Naive thymus-derived CD4-positive, alpha-beta T cell (primary cell): ENCODE measurements at regions of chr2 and their contacts with region 1.

Region 1: DNA sequence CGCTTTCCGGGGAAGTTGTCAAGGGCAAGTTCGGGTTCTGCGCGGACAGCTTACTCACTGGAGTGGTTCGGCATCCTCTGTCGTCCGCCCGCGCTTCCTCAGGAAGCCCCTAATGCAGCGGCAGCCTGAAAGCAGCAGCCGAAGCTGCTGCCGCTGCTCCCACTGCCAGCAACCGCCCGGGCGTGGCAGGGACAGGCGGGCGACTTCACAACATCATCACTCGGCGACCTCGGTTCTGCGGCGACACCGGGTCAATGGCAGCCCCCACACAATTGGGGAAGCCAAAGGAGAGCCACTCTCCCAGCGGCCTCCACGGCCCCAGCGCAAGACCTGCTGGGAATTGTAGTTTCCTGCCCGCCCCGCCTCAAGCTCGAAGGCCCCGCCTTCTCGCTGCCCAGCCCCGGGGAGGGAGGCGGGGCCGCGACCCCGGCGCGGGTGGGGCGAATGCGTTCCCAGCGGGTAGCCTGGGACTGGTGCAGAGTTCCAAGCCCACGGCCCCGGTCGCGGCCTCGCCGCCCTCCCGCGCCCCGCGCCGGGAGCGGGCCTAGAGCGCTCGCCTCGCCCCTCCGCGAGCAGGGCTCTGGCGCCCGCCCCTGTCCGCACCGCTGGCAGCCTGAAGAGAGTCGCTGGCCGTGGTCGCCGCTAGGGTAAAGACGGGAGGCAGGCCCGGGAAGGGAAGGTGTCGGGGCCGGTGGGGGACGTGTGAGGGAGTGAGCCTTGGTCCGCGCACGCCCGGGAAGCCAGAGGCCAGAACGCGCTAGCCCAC is at the starts of genes STRADB and TRAK2:
- DNase-seq: peak; percentile 84 to 95 (median 92)
- ATAC-seq: peak; percentile 96
- H3K4me3 ChIP-seq: peak within 1 kb of the TSS; percentile 96
- H3K4me3 Mint-ChIP-seq: peak within 1 kb of the TSS; percentile 94 to 98 (median 97)
- H3K27ac ChIP-seq: peak within 1 kb of the TSS; percentile 83
- H3K27ac Mint-ChIP-seq: peak within 1 kb of the TSS; percentile 85 to 97 (median 95)
- H3K4me1 ChIP-seq: peaks cover 33 to 39% of the 10 kb centered on the region in 2 donors
- H3K4me1 Mint-ChIP-seq: peaks cover 27 to 69% (median 41%) of the 10 kb centered on the region in 7 donors
- H3K27me3 ChIP-seq: no peaks in the 10 kb centered on the region
- H3K27me3 Mint-ChIP-seq: peaks cover 0 to 8% (median 0%) of the 10 kb centered on the region in 5 donors
- total RNA-seq, gene STRADB: 11.9 to 18.4 (median 16.1) TPM
- total RNA-seq, gene TRAK2: 27.8 to 47.6 (median 35.2) TPM

Region 2: DNA sequence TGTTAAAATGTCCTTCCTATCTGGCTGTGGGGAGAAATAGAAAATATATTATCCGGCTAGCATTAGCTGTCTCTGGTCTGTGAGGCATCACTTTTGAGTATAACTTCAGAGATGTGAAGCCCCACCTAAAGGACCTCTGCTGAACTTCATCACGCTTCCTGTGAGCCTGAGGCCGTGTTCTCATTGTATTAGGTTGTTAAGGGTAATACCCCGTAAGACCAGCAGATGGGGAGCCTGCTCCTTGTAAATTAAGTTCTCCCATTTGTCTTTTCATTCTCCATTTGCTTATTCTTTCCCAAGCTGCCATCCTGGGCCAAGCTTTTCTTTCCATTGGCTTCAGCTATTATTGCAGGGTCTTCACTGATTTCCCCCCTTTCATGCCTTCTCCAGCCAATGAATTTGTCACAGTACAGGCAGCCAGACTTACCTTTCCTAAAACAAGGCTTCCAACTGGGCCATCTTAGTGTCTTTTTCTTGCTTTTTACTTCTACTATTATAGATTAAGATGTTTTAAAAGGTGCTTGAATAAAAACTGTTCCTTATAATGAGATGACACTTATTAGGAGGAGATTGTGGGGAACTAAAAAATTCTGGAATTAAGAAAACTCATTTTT is 549.9 kb before region 1 on chr2:
- CTCF ChIA-PET with region 1: no interaction called
- POLR2A ChIA-PET with region 1: no interaction called
- intact Hi-C with region 1: loop called in 1 of 2 experiments (anchors 5 kb)
- DNase-seq: peak; percentile 18 to 83 (median 76)
- ATAC-seq: peak; percentile 100
- H3K4me3 ChIP-seq: no peak overlapping the region
- H3K4me3 Mint-ChIP-seq: no peak overlapping the region
- H3K27ac ChIP-seq: no peak overlapping the region
- H3K27ac Mint-ChIP-seq: peak overlapping the region; percentile 4 to 86 (median 44)
- H3K4me1 ChIP-seq: no peaks in the 10 kb centered on the region
- H3K4me1 Mint-ChIP-seq: peaks cover 0 to 27% (median 6%) of the 10 kb centered on the region in 7 donors
- H3K27me3 ChIP-seq: no peaks in the 10 kb centered on the region
- H3K27me3 Mint-ChIP-seq: no peaks in the 10 kb centered on the region

Region 3: GRCh38 chr2:201059961-201060755 is 391.3 kb before region 1 on chr2:
- CTCF ChIA-PET with region 1: no interaction called
- POLR2A ChIA-PET with region 1: no interaction called
- intact Hi-C with region 1: no loop called
- DNase-seq: no peak
- ATAC-seq: no peak
- H3K4me3 ChIP-seq: no peak overlapping the region
- H3K4me3 Mint-ChIP-seq: no peak overlapping the region
- H3K27ac ChIP-seq: no peak overlapping the region
- H3K27ac Mint-ChIP-seq: peak overlapping the region in 3 of 9 donors; percentile 39 to 51 (median 50)
- H3K4me1 ChIP-seq: no peaks in the 10 kb centered on the region
- H3K4me1 Mint-ChIP-seq: peaks cover 30 to 54% (median 46%) of the 10 kb centered on the region in 7 donors
- H3K27me3 ChIP-seq: no peaks in the 10 kb centered on the region
- H3K27me3 Mint-ChIP-seq: no peaks in the 10 kb centered on the region

Region 4: DNA sequence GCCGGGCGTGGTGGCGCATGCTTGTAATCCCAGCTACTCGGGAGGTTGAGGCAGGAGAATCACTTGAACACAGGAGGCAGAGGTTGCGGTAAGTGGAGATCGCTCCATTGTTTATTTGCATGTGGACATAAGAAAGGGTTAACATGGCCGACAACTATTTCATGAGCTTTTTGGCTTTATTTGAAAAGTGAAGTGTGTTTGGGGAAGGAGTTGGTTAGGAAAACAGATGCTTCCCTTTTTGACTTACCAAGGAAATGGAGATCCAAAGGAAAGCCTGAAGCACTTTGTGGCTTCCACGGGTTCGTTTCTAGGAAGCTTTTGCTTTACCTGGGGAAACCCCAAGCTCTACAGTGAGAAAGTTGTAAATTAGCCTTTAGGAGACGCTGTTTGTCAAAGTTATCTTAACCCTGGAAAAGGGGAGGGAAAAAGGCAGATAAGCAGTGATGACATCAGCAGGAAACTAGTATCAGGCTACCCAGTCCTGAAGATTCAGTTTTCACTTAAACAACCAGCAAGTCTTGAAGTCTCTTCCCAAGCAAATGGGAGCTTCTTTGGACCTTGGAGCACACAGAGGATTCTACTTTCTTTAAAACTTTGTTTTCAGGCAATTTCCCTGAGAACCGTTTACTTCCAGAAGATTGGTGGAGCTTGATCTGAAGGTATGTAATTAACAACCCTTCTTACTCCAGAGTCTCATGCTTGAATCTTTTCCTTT is 268.7 kb before region 1 on chr2 and contains the start of gene CASP10:
- CTCF ChIA-PET with region 1: interaction called, 3 read pairs
- POLR2A ChIA-PET with region 1: interaction called, 5 read pairs
- intact Hi-C with region 1: loop called (anchors 1 kb)
- DNase-seq: peak in 7 of 9 donors; percentile 67 to 83 (median 77)
- ATAC-seq: peak; percentile 90
- H3K4me3 ChIP-seq: peak within 1 kb of the TSS; percentile 68
- H3K4me3 Mint-ChIP-seq: peak within 1 kb of the TSS; percentile 87 to 99 (median 95)
- H3K27ac ChIP-seq: peak within 1 kb of the TSS; percentile 89
- H3K27ac Mint-ChIP-seq: peak within 1 kb of the TSS; percentile 86 to 98 (median 95)
- H3K4me1 ChIP-seq: peaks cover 22 to 24% of the 10 kb centered on the region in 2 donors
- H3K4me1 Mint-ChIP-seq: peaks cover 26 to 46% (median 29%) of the 10 kb centered on the region in 7 donors
- H3K27me3 ChIP-seq: no peaks in the 10 kb centered on the region
- H3K27me3 Mint-ChIP-seq: no peaks in the 10 kb centered on the region
- total RNA-seq, gene CASP10: 29.0 to 49.8 (median 42.9) TPM

Region 5: DNA sequence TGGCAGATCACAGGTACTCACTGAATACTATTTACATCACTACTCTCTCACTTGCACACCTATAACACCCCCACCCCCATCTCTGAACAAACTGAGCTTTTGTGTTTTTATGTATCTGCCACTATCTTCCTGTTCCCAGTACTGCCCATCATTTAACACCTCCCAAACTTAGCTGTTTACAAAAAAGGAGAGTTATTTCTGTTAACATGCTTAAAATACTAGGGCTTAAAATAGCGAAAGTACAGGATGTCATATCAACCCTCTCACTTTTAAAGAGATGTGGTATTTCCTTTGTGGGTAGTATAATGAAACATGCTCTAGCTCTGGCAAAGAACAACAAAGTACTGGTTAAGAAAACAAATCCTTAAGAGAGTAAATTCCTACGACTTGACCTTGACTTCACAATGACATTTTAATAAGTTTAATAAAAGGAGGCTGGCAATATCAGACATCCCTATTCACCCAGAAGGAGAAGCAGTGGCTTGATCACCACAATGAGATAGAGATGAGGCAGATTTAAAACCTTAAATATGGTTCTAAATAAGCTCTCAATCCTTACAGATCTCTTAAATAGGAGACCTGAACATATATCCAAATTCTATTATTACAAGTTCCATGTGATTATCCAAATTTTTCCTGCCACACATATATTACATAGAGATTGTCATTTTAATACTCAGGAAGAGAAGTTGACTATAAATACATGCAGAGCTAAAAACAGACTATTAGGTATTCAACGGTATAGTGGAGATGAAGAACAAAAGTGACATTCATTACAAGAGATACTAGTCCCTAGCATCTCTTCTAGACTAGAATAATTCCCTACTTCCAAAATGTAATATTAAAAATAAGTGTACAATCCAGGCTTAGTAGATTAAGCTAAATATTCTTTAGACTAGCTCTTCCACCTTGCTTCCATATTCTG is 37.1 kb before region 1 on chr2:
- CTCF ChIA-PET with region 1: interaction called, 4 read pairs
- POLR2A ChIA-PET with region 1: interaction called, 20 read pairs
- intact Hi-C with region 1: loop called (anchors 1 kb)
- DNase-seq: peak in 6 of 9 donors; percentile 7 to 55 (median 25)
- ATAC-seq: peak; percentile 78
- H3K4me3 ChIP-seq: peak overlapping the region; percentile 10
- H3K4me3 Mint-ChIP-seq: no peak overlapping the region
- H3K27ac ChIP-seq: peak overlapping the region; percentile 48
- H3K27ac Mint-ChIP-seq: no peak overlapping the region
- H3K4me1 ChIP-seq: peaks cover 28 to 29% of the 10 kb centered on the region in 2 donors
- H3K4me1 Mint-ChIP-seq: peaks cover 4 to 29% (median 24%) of the 10 kb centered on the region in 7 donors
- H3K27me3 ChIP-seq: no peaks in the 10 kb centered on the region
- H3K27me3 Mint-ChIP-seq: no peaks in the 10 kb centered on the region

Region 6: GRCh38 chr2:201642579-201643215 is 191.2 kb after region 1 on chr2:
- CTCF ChIA-PET with region 1: no interaction called
- POLR2A ChIA-PET with region 1: interaction called, 19 read pairs
- intact Hi-C with region 1: loop called (anchors 1 kb)
- DNase-seq: peak; percentile 81 to 94 (median 92)
- ATAC-seq: peak; percentile 94
- H3K4me3 ChIP-seq: peak overlapping the region; percentile 95
- H3K4me3 Mint-ChIP-seq: peak overlapping the region; percentile 86 to 99 (median 96)
- H3K27ac ChIP-seq: peak overlapping the region; percentile 87
- H3K27ac Mint-ChIP-seq: peak overlapping the region; percentile 76 to 100 (median 97)
- H3K4me1 ChIP-seq: peaks cover 3 to 5% of the 10 kb centered on the region in 2 donors
- H3K4me1 Mint-ChIP-seq: peaks cover 5 to 21% (median 12%) of the 10 kb centered on the region in 7 donors
- H3K27me3 ChIP-seq: no peaks in the 10 kb centered on the region
- H3K27me3 Mint-ChIP-seq: peaks cover 0 to 4% (median 0%) of the 10 kb centered on the region in 5 donors

Region 7: DNA sequence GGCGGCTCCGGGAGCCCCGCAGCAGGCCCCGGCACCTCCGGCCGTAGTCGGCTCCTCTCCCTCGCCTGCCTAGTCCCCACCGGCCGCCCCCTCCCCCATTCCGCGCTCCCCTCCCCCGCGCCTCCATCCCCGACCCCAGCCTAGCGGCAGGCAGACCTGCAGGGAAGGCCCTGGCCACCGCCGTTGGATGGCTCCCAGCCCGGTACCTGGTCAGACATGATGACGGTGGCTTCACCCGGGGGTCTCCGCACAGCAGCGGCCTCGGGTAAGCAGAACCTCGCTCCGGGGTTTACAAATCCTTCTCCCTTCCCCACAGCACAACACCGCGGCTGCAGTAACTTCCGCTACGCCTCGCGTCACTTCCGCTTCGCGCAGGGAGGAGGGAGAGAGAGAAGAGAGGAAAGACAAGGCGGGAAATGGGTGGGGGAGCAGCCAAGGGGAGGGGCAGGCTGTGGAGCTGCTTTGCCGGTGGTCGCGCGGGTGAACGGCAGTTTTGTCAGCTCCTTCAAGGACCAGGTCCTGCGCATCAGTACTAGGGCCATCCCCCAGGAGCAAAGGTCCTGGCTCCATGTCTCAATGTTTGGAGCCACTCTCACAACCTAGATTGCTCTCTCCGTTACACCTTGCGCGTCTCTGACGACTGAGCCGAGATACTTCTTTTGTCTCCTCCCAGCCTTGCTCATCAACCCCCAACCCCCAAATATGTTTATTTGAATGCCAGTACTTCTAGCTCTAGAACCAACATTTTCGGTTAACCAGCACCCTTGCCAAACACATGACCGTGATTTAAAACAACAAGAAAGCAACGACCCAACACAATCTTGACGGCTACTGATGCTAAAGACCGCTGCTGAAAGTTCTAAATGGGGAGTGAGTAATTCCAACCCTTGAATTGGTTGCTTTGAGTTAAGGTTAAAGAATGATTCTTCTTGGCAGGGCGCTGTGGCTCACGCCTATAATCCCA is 787.0 kb after region 1 on chr2 and contains the start of gene SUMO1:
- CTCF ChIA-PET with region 1: no interaction called
- POLR2A ChIA-PET with region 1: no interaction called
- intact Hi-C with region 1: loop called in 1 of 2 experiments (anchors 1 kb)
- DNase-seq: peak; percentile 80 to 95 (median 93)
- ATAC-seq: peak; percentile 98
- H3K4me3 ChIP-seq: peak within 1 kb of the TSS; percentile 82
- H3K4me3 Mint-ChIP-seq: peak within 1 kb of the TSS; percentile 91 to 100 (median 97)
- H3K27ac ChIP-seq: peak within 1 kb of the TSS; percentile 88
- H3K27ac Mint-ChIP-seq: peak within 1 kb of the TSS; percentile 96 to 99 (median 97)
- H3K4me1 ChIP-seq: peaks cover 11% of the 10 kb centered on the region in 2 donors
- H3K4me1 Mint-ChIP-seq: peaks cover 10 to 51% (median 35%) of the 10 kb centered on the region in 7 donors
- H3K27me3 ChIP-seq: no peaks in the 10 kb centered on the region
- H3K27me3 Mint-ChIP-seq: peaks cover 0 to 2% (median 0%) of the 10 kb centered on the region in 5 donors
- total RNA-seq, gene SUMO1: 48.1 to 104 (median 56.8) TPM